BJ (cell line): ENCODE measurements at regions of chr2 and their contacts with region 1.

Region 1: DNA sequence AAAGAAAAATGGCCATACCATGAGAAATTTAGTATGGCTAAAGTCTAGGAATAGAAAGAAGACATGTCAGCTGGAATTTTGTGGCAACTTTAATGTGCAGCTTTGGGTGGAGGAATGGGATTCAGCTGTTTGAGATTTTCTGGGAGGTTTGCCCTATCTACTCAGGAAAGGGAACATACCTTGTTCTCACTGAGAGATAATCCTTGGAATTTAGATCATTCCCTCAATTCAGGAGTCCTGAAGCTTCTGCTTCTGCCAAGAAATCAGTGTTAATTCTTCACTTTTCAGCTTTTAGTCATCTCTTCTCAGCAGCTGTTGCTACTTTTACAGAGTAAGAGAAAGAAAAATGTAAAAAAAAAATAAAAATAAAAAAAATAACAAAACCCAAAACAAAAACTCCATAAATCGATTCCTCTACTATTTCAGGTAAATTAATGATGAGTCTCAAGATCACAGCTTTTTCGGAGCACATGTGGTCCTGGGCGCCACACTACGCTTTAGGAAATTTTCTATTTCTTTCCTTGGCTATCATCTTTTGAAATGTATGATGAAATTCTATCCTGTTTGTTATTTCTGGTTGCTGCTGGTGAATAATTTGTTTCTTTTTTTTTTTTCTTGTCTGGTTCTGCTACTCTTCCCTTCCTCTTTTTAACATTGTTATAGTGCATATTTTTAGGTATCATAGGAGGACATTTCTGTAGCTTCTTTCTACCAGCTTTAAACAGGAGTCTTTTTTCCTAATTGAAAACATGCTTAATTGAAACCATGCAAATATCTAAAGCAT is 18.9 kb upstream of the BAZ2B start:
- DNase-seq: no peak
- H3K4me3 ChIP-seq: no peak overlapping the region
- H3K27me3 ChIP-seq: no peaks in the 10 kb centered on the region
- CTCF ChIP-seq: no peak

Region 2: DNA sequence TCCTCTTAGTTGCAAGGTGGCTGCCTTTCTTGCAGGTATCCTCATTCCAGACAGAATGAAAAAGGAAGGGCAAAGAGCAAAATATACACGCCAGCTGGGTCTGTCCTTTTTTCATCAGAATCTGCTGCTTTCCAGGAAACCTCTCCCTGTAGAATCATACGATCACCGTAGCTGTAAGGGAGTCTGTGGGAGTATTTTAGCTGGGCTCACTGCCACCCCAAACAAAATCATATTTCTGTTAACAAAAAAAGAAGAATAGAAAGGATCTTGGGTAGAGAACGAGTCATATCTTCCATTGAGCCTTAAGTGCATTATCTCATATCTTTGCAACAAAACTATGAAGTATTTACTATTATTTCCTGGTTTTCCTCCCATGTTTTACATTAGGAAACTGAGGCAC is 681.7 kb before region 1 on chr2:
- CTCF ChIA-PET with region 1: no interaction called
- POLR2A ChIA-PET with region 1: interaction called, 26 read pairs
- DNase-seq: no peak
- H3K4me3 ChIP-seq: no peak overlapping the region
- H3K27me3 ChIP-seq: 0 out of 2 replicates have a peak, but pooled peaks cover 2% of the 10 kb centered on the region
- CTCF ChIP-seq: no peak